Common myeloid progenitor, CD34-positive (primary cell): ENCODE measurements at regions of chr5 and their contacts with region 1.

Region 1: GRCh38 chr5:180831139-180832048 is 28.8 kb upstream of the MGAT1 start:
- DNase-seq: peak; percentile 63 to 77 (median 75)
- H3K4me3 ChIP-seq: peak overlapping the region; percentile 75 to 97 (median 84)
- H3K27ac ChIP-seq: peak overlapping the region; percentile 93 to 95
- H3K4me1 ChIP-seq: peaks cover 4 to 26% (median 24%) of the 10 kb centered on the region in 4 experiments
- H3K27me3 ChIP-seq: no peaks in the 10 kb centered on the region

Region 2: DNA sequence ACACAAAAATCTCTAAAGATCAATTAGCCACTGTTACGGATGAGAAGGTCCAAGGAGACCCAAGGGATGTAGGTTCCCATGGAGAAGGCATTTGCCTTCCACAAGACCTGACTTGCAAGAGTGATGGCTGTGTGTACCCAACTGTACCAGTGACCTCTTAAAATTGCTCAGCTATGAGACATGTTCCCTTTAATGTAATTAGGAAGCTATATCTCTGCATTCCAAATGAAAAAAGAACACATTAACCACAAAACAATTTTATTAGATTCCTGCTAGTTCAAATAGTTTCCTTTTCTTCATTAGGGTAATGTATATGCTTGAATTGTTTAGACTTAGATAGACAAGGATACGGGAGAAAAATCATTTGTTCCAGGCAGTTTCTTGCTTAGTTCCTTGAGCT is 94.9 kb before region 1 on chr5:
- CTCF ChIA-PET with region 1: no interaction called
- POLR2A ChIA-PET with region 1: no interaction called
- DNase-seq: no peak
- H3K4me3 ChIP-seq: no peak overlapping the region
- H3K27ac ChIP-seq: no peak overlapping the region
- H3K4me1 ChIP-seq: no peaks in the 10 kb centered on the region
- H3K27me3 ChIP-seq: peaks cover 0 to 17% (median 9%) of the 10 kb centered on the region in 5 experiments

Region 3: DNA sequence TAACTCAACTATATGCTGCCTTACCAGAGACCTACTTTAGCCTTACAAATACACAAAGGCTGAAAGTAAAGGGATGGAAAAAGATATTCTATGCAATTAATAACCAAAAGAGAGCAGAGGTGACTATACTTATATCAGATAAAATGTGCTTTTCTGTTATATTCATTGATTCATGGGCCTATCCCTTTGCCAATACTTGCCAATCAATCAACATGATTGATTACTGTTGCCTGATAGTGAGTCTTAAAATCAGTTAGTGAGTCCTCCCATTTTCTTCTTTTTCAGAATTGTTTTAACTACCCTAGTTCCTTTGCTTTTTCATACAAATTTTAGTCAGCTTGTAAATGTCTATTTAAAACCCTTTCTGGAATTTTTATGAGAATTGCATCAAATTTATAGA is 68.1 kb before region 1 on chr5:
- CTCF ChIA-PET with region 1: no interaction called
- POLR2A ChIA-PET with region 1: no interaction called
- DNase-seq: no peak
- H3K4me3 ChIP-seq: no peak overlapping the region
- H3K27ac ChIP-seq: no peak overlapping the region
- H3K4me1 ChIP-seq: no peaks in the 10 kb centered on the region
- H3K27me3 ChIP-seq: no peaks in the 10 kb centered on the region

Region 4: GRCh38 chr5:180790011-180790410 is 41.4 kb before region 1 on chr5:
- CTCF ChIA-PET with region 1: interaction called, 10 read pairs
- POLR2A ChIA-PET with region 1: interaction called, 6 read pairs
- DNase-seq: peak; percentile 80 to 87 (median 82)
- H3K4me3 ChIP-seq: no peak overlapping the region
- H3K27ac ChIP-seq: peak overlapping the region in 1 of 2 experiments; percentile 2
- H3K4me1 ChIP-seq: peaks cover 0 to 32% (median 29%) of the 10 kb centered on the region in 4 experiments
- H3K27me3 ChIP-seq: no peaks in the 10 kb centered on the region

Region 5: DNA sequence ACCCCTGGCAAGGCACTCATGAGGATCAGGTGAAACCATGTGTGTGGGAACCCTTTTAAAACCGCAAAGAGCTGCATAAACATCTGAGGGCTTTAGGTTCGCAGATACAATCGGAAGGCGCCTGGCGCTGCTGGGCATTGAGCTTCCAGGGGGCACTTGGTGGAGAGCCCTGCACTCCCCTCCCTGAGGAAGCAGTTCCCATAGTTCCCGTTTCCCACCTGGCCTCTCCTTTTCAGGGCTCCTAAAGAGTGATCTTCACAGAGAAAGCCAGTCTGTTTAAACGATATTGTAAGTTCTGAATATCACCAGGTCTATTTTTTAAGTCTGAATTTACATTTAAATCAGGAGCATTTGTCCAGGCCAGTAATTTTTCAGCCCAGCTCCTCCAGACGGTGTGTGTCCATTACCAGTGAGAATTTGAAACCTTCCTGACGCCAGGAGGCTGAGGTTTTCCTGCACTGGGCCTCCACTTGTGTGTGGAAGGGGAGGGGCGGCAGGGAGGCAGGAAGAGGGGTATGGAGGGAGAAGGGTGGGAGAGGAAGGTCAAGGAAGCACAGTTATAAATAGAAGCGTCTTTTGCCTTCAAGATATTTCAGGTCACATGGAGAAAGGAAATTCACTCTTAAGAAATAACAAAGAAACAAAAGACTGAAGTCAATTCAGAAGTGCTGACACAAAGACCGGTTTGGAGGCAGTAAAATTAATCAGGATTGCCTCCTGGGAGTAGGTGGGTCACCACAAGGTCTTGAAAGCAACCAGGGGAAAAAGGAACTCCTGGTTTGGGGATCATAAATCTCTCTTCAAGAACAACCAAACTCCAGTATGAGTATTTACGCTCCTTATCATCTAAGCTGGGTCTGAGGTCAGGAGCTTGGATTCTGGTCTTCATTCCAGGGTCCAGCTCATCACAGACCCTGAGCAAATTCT is 14.5 kb before region 1 on chr5:
- CTCF ChIA-PET with region 1: interaction called, 22 read pairs
- POLR2A ChIA-PET with region 1: interaction called, 4 read pairs
- DNase-seq: peak in 1 of 3 donors; percentile 46
- H3K4me3 ChIP-seq: peak overlapping the region in 5 of 7 experiments; percentile 19 to 64 (median 34)
- H3K27ac ChIP-seq: peak overlapping the region; percentile 28 to 65
- H3K4me1 ChIP-seq: peaks cover 8 to 57% (median 37%) of the 10 kb centered on the region in 4 experiments
- H3K27me3 ChIP-seq: no peaks in the 10 kb centered on the region

Region 6: GRCh38 chr5:181028032-181028819 is 196.8 kb after region 1 on chr5:
- CTCF ChIA-PET with region 1: no interaction called
- POLR2A ChIA-PET with region 1: no interaction called
- DNase-seq: no peak
- H3K4me3 ChIP-seq: no peak overlapping the region
- H3K27ac ChIP-seq: no peak overlapping the region
- H3K4me1 ChIP-seq: no peaks in the 10 kb centered on the region
- H3K27me3 ChIP-seq: peaks cover 0 to 8% (median 0%) of the 10 kb centered on the region in 5 experiments